PC-9 (cell line): ENCODE measurements at regions of chr6 and their contacts with region 1.

Region 1: DNA sequence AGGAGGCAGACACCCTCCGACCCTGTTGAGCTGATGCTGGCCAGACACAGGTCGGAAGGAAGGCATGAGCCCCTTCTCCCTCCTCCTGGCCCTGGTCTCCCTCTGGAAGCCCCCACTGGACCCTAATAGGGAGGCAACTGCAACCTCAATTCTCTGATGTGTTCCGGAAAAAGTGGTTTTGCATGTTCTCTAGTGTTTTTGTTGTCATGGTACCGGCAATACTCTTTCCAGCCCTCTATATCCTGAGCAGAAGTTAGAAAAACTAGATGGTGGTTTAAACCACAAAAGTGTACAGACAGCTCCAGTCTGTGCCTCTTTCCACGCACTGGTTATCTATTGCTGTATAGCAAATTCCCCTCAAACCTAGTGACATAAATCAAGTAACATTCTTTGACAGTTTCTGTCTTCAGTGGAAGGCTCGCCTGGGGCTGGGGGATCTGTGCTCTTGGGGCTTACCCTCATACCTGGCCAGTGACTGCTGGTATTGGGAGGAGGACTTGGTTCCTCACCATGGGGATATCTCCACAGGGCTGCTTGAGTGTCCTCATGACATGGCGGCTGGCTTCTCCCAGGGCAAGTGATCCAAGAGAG is 37.0 kb downstream of the SYTL3 start:
- DNase-seq: no peak
- H3K4me3 ChIP-seq: no peak overlapping the region
- H3K27ac ChIP-seq: peak overlapping the region; percentile 20
- H3K4me1 ChIP-seq: peaks cover 57% of the 10 kb centered on the region
- H3K27me3 ChIP-seq: no peaks in the 10 kb centered on the region
- CTCF ChIP-seq: no peak

Region 2: DNA sequence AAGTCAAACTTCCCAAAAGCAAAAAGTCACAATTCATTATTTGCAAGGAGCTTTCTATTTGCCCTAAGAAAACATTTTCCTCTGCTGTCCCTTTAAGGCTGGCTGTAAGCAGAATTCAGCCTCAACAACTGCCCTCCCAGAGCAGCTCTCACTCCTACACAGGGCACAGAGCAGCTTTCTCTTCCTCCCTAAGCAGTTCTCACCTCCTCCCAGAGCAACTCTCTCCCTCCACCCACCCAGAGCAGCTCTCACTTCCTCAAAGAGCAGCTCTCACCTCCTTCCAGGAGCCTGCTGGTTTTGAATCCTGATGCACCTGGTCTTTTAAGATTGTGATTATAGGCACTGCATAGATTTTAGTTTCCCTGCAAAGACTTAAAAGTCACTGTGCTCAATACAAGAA is 247.6 kb before region 1 on chr6:
- CTCF ChIA-PET with region 1: no interaction called
- POLR2A ChIA-PET with region 1: no interaction called
- intact Hi-C with region 1: no loop called
- DNase-seq: no peak
- H3K4me3 ChIP-seq: no peak overlapping the region
- H3K27ac ChIP-seq: no peak overlapping the region
- H3K4me1 ChIP-seq: no peaks in the 10 kb centered on the region
- H3K27me3 ChIP-seq: no peaks in the 10 kb centered on the region
- CTCF ChIP-seq: no peak

Region 3: GRCh38 chr6:158631678-158632537 is 55.0 kb before region 1 on chr6:
- CTCF ChIA-PET with region 1: no interaction called
- POLR2A ChIA-PET with region 1: no interaction called
- intact Hi-C with region 1: loop called (anchors 2 kb)
- DNase-seq: peak; percentile 65 to 76
- H3K4me3 ChIP-seq: no peak overlapping the region
- H3K27ac ChIP-seq: peak overlapping the region; percentile 5
- H3K4me1 ChIP-seq: no peaks in the 10 kb centered on the region
- H3K27me3 ChIP-seq: no peaks in the 10 kb centered on the region
- CTCF ChIP-seq: no peak

Region 4: DNA sequence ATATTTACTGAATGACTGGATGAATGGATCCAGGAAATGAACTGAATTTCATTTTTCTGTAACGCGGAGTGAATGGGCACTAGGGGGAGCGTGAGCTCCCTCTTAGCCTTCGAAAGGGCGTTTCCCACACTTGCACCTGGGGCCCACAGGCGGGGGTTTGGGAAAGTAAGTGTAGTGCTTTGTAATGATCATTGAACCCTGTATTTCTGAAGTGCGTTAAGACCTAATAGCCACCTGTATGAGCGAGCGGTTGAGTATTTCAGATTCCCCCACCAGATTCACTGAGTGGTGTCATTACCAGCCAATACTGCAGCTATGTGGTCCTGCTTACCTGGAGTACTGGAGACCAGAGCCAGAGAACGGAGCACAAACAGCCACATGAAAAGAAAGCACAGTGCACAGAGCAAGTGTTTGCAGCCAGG is 26.5 kb before region 1 on chr6:
- CTCF ChIA-PET with region 1: interaction called, 3 read pairs
- POLR2A ChIA-PET with region 1: no interaction called
- intact Hi-C with region 1: loop called (anchors 1 kb)
- DNase-seq: peak in 1 of 2 experiments; percentile 78
- H3K4me3 ChIP-seq: no peak overlapping the region
- H3K27ac ChIP-seq: 0 out of 2 replicates have a peak overlapping the region, but pooled peaks have one; percentile 7
- H3K4me1 ChIP-seq: peaks cover 80% of the 10 kb centered on the region
- H3K27me3 ChIP-seq: no peaks in the 10 kb centered on the region
- CTCF ChIP-seq: peak; percentile 74